ENCODE measurements at regions of chr1 and their contacts with region 1.

Region 1: GRCh38 chr1:16073490-16074119 is at the start of gene FAM131C:
- DNase-seq: peak; percentile 52
- ATAC-seq: peak; percentile 81
- H3K4me3 Mint-ChIP-seq: peak within 1 kb of the TSS; percentile 70
- H3K27ac Mint-ChIP-seq: no peak within 1 kb of the TSS
- H3K4me1 Mint-ChIP-seq: peaks cover 8% of the 10 kb centered on the region
- H3K27me3 Mint-ChIP-seq: peaks cover 51% of the 10 kb centered on the region
- CTCF ChIP-seq: 0 out of 2 replicates have a peak, but pooled peaks have one; percentile 16
- total RNA-seq, gene FAM131C: 1.4 to 2.0 TPM (median 1.8 TPM) in 3 replicates

Region 2: GRCh38 chr1:15975805-15976680 is 97.6 kb before region 1 on chr1 and contains the start of gene ZBTB17:
- CTCF ChIA-PET with region 1: interaction called, 14 read pairs
- POLR2A ChIA-PET with region 1: no interaction called
- DNase-seq: peak; percentile 96
- ATAC-seq: peak; percentile 90
- H3K4me3 Mint-ChIP-seq: peak within 1 kb of the TSS; percentile 89
- H3K27ac Mint-ChIP-seq: peak within 1 kb of the TSS; percentile 85
- H3K4me1 Mint-ChIP-seq: peaks cover 12% of the 10 kb centered on the region
- H3K27me3 Mint-ChIP-seq: no peaks in the 10 kb centered on the region; the same call in 1 of the 2 replicates
- CTCF ChIP-seq: no peak
- total RNA-seq, gene ZBTB17: 27.6 to 32.0 TPM (median 27.9 TPM) in 3 replicates

Region 3: GRCh38 chr1:16009030-16009709 is 64.4 kb before region 1 on chr1:
- CTCF ChIA-PET with region 1: interaction called, 12 read pairs
- POLR2A ChIA-PET with region 1: no interaction called
- DNase-seq: peak; percentile 97
- ATAC-seq: peak; percentile 53
- H3K4me3 Mint-ChIP-seq: no peak overlapping the region
- H3K27ac Mint-ChIP-seq: no peak overlapping the region
- H3K4me1 Mint-ChIP-seq: peaks cover 24% of the 10 kb centered on the region
- H3K27me3 Mint-ChIP-seq: no peaks in the 10 kb centered on the region
- CTCF ChIP-seq: peak; percentile 98

Region 4: DNA sequence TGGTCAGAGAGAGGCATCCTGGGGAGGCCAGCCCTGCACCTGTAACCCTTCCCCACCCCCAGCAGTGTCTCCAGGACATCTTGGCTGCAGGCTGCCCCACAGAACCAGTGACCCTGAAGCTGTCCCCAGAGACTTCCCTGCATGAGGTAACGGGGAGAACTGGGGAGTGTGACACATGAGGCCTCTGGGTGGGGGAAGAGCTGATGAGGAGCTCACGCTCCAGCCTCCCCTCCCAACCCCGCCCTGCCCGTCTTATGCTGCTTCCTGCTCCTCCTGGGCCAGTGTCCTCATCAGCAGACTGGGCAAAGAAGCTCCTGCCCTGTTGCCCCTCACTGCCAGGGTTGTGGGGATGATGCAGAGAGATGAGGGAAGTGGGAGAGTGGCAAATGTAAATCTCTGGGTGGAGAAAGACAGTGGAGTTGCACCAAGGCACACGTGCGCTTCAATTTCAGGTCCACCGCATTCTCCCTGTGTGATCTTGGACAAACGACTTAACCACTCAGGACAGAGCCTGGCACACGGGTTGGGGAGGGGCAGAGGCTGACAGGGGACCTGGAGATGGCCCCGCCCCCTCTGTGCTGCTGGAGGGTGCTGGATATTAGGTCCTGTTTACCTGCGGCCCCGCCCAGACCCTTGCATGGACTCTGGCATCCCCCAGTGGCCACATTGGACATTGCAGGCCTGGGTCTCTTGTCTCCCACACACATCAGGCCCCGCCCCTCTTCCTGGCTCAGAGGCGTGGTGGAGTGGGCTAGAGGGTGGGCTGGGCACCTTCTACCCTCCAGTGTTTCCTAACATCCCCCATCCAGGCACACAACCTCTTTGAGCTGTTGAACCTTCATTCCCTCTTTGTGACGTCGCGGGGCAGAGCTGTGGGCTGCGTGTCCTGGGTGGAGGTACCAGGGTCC is 17.7 kb before region 1 on chr1:
- CTCF ChIA-PET with region 1: interaction called, 16 read pairs
- POLR2A ChIA-PET with region 1: no interaction called
- DNase-seq: peak; percentile 99
- ATAC-seq: peak; percentile 97
- H3K4me3 Mint-ChIP-seq: peak overlapping the region; percentile 24; the same call in 1 of the 2 replicates
- H3K27ac Mint-ChIP-seq: no peak overlapping the region
- H3K4me1 Mint-ChIP-seq: peaks cover 7% of the 10 kb centered on the region
- H3K27me3 Mint-ChIP-seq: no peaks in the 10 kb centered on the region; the same call in 1 of the 2 replicates
- CTCF ChIP-seq: peak; percentile 96

Region 5: DNA sequence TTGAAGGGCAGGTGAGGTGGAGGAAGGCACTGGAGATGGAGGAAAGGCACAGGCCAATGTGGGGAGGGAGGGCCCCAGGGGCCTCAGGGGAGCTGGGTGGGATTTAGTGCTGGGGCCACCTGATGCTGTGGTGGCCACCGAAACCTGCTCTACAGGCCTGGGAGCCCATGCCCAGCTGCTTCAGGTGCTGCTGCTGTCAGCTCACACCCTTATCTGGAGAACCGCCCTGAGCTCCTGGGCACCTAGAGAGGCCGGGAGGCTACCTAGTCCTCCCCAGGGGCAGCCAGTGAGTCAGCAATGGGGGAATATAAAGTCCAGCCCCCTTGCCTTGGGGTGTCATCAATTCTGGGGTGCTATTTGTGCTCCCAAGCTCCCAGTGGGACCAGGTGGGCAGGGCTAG is 12.3 kb before region 1 on chr1:
- CTCF ChIA-PET with region 1: interaction called, 16 read pairs
- POLR2A ChIA-PET with region 1: no interaction called
- DNase-seq: no peak
- ATAC-seq: no peak
- H3K4me3 Mint-ChIP-seq: no peak overlapping the region
- H3K27ac Mint-ChIP-seq: no peak overlapping the region
- H3K4me1 Mint-ChIP-seq: peaks cover 26% of the 10 kb centered on the region
- H3K27me3 Mint-ChIP-seq: no peaks in the 10 kb centered on the region; the same call in 1 of the 2 replicates
- CTCF ChIP-seq: no peak

Region 6: DNA sequence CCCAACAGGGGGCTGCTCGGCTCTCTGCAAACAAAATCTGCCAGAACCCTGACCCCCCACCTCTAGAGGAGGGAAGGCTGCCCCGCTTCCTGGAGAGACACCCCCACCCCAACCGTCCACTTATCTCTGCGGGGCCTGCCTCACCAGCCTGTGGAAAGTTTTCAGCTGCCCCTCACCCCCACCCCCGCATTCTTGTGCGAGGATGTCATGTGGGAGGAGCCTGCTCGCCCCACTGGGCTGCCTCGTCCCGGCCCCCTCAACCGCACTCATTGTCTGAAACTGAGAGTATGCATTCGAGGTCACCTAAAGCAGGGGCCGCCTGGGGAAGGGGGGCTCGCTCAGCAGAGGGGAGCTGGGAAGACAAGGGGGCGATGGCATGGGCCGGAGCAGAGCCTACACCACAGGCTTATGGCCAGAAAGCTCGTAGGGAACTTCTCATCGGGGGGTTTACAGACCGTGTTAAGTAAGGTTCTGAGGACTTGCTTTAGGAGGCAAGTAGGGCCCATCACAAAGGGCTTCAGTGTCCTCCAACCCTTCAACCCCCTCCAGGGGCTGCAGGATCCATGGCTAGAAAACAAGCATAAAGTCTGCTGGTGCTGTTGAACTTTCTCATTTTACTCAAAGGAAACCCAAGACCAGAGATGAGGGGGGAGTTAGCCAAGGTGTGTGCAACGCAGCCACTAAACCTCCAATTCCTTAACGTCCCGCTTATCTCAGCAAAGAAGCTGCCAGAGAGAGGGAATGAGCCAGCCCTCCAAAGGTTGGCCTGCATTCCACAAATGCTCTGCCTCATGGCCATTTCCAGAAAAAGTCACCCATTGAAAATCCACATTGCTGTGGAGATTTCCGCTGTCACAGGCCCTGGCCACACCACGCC is 72.9 kb after region 1 on chr1:
- CTCF ChIA-PET with region 1: interaction called, 204 read pairs
- POLR2A ChIA-PET with region 1: no interaction called
- DNase-seq: peak; percentile 89
- ATAC-seq: peak; percentile 71
- H3K4me3 Mint-ChIP-seq: peak overlapping the region; percentile 52
- H3K27ac Mint-ChIP-seq: peak overlapping the region; percentile 99
- H3K4me1 Mint-ChIP-seq: peaks cover 56% of the 10 kb centered on the region
- H3K27me3 Mint-ChIP-seq: no peaks in the 10 kb centered on the region
- CTCF ChIP-seq: no peak

Region 7: DNA sequence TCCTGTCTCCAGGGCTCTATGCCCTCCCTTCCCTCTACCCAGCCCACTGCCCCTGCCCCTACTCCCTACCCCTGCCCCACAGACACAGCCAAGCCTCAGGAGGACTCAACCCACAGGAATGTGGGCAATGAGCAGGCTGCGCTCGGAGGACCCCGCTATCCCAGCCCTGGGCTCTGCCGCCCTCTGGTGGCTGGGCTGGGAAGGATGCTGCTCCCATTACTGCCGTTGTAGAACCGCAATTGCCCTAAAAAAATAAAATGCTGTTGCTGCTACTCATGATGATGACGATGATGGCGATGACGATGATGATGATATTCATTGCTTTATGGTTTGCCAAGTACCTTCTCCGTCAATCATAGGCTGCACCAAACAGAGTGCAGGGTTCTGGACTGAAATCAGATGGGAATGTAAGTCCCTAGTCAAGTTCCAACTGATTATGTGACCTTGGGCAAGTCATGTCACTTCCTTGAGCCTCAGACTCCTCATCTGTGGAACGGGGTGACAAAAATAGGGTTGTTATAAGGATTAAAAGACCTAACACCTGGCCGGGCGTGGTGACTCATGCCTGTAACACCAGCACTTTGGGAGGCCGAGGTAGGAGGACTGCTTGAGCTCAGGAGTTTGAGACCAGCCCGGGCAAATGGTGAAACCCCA is 114.3 kb after region 1 on chr1:
- CTCF ChIA-PET with region 1: interaction called, 161 read pairs
- POLR2A ChIA-PET with region 1: interaction called, 5 read pairs
- DNase-seq: peak; percentile 85
- ATAC-seq: peak; percentile 84
- H3K4me3 Mint-ChIP-seq: no peak overlapping the region
- H3K27ac Mint-ChIP-seq: no peak overlapping the region
- H3K4me1 Mint-ChIP-seq: no peaks in the 10 kb centered on the region
- H3K27me3 Mint-ChIP-seq: no peaks in the 10 kb centered on the region; the same call in 1 of the 2 replicates
- CTCF ChIP-seq: peak; percentile 90

Region 8: GRCh38 chr1:16266411-16267118 is 193.0 kb after region 1 on chr1:
- CTCF ChIA-PET with region 1: no interaction called
- POLR2A ChIA-PET with region 1: no interaction called
- DNase-seq: no peak
- ATAC-seq: no peak
- H3K4me3 Mint-ChIP-seq: no peak overlapping the region
- H3K27ac Mint-ChIP-seq: peak overlapping the region; percentile 61; the same call in 1 of the 2 replicates
- H3K4me1 Mint-ChIP-seq: peaks cover 15% of the 10 kb centered on the region
- H3K27me3 Mint-ChIP-seq: no peaks in the 10 kb centered on the region
- CTCF ChIP-seq: no peak